Heart right ventricle (tissue), 16 donors: ENCODE measurements at regions of chr12 and their contacts with region 1.

Region 1: GRCh38 chr12:50265770-50266524 is 17.4 kb downstream of the LIMA1 start:
- DNase-seq: no peak
- ATAC-seq: peak in 3 of 8 donors; percentile 22 to 46 (median 31)
- H3K4me3 ChIP-seq: no peak overlapping the region
- H3K27ac ChIP-seq: peak overlapping the region in 1 of 10 donors; percentile 27
- H3K4me1 ChIP-seq: peaks cover 0 to 20% (median 7%) of the 10 kb centered on the region in 9 donors
- H3K27me3 ChIP-seq: no peaks in the 10 kb centered on the region
- CTCF ChIP-seq: no peak

Region 2: GRCh38 chr12:49945394-49946080 is 320.4 kb before region 1 on chr12:
- intact Hi-C with region 1: no loop called
- DNase-seq: peak; percentile 81 to 87
- ATAC-seq: peak; percentile 94 to 97 (median 96)
- H3K4me3 ChIP-seq: peak overlapping the region in 8 of 10 donors; percentile 13 to 44 (median 36)
- H3K27ac ChIP-seq: peak overlapping the region in 5 of 10 donors; percentile 15 to 65 (median 53)
- H3K4me1 ChIP-seq: peaks cover 0 to 26% (median 10%) of the 10 kb centered on the region in 9 donors
- H3K27me3 ChIP-seq: peaks cover 0 to 12% (median 0%) of the 10 kb centered on the region in 7 donors
- CTCF ChIP-seq: peak; percentile 72 to 97 (median 95)

Region 3: DNA sequence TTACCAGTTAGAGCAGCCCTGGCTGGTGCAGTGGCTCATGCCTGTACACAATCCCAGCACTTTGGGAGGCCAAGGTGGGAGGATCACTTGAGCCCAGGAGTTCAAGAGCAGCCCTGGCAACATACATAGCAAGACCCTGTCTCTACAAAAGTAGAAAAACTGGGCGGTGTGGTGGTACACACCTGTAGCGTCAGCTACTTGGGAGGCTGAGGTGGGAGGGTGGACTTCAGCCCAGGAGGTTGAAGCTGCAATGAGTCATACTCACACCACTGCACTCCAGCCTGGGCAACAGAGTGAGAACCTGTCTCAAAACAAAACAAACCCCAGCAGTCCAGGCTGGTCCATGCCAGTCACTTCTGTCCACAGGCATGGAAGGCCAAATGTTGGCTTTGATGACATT is 146.6 kb before region 1 on chr12:
- intact Hi-C with region 1: no loop called
- DNase-seq: no peak
- ATAC-seq: no peak
- H3K4me3 ChIP-seq: no peak overlapping the region
- H3K27ac ChIP-seq: no peak overlapping the region
- H3K4me1 ChIP-seq: peaks cover 0 to 41% (median 25%) of the 10 kb centered on the region in 9 donors
- H3K27me3 ChIP-seq: no peaks in the 10 kb centered on the region
- CTCF ChIP-seq: no peak

Region 4: GRCh38 chr12:50151047-50151687 is 114.8 kb before region 1 on chr12:
- intact Hi-C with region 1: no loop called
- DNase-seq: no peak
- ATAC-seq: peak in 1 of 8 donors; percentile 51
- H3K4me3 ChIP-seq: no peak overlapping the region
- H3K27ac ChIP-seq: no peak overlapping the region
- H3K4me1 ChIP-seq: peaks cover 0 to 21% (median 5%) of the 10 kb centered on the region in 9 donors
- H3K27me3 ChIP-seq: no peaks in the 10 kb centered on the region
- CTCF ChIP-seq: no peak

Region 5: DNA sequence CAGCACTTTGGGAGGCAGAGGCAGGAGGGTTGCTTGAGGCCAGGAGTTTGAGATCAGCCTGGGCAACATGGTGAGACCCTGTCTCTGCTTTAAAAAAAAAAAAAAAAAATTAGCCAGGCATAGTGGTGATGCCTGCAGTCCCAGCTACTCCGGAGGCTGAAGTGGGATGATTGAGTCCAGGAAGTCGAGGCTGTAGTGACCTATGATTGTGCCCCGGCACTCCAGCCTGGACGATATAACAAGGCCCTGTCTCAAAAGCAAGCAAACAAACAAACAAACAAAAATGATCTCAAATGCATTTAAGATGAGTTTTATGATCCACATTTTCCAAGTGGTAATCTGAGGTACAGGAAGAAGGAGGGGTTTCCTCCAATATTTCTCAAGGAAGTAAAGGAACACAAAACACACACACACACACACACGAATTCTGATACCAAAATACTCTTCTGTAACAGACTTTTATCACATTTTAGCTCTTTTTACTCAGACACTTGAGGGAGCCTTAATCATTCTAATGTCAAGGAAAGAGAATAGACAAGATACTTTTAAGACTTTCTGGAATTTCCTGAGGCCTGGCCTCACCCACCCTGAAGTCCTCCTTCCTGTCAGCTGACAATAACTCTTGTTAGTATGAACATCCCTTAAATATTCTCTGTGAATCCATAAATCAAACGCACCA is 54.4 kb before region 1 on chr12:
- intact Hi-C with region 1: loop called in 1 of 10 experiments (anchors 2 kb)
- DNase-seq: no peak
- ATAC-seq: peak in 7 of 8 donors; percentile 47 to 79 (median 72)
- H3K4me3 ChIP-seq: no peak overlapping the region
- H3K27ac ChIP-seq: peak overlapping the region; percentile 31 to 83 (median 68)
- H3K4me1 ChIP-seq: peaks cover 5 to 36% (median 14%) of the 10 kb centered on the region in 9 donors
- H3K27me3 ChIP-seq: no peaks in the 10 kb centered on the region
- CTCF ChIP-seq: peak in 4 of 9 donors; percentile 12 to 44 (median 30)